H1 (cell line): ENCODE measurements at regions of chr12 and their contacts with region 1.

Region 1: GRCh38 chr12:3885277-3886094 is 12.3 kb upstream of the PARP11 start:
- DNase-seq: no peak
- H3K4me3 ChIP-seq: no peak overlapping the region
- H3K27ac ChIP-seq: no peak overlapping the region
- H3K4me1 ChIP-seq: peaks cover 0 to 2% (median under 1%) of the 10 kb centered on the region in 4 experiments; a peak in 5 of 7 replicates
- H3K27me3 ChIP-seq: no peaks in the 10 kb centered on the region; a peak in 1 of 7 replicates
- CTCF ChIP-seq: peak in 2 of 3 experiments; percentile 67 to 70; a peak in 3 of 4 replicates
- EP300 ChIP-seq: no peak
- POLR2A ChIP-seq: no peak
- RAD21 ChIP-seq: peak; percentile 93

Region 2: GRCh38 chr12:3803865-3804472 is 81.5 kb before region 1 on chr12:
- CTCF ChIA-PET with region 1: no interaction called
- POLR2A ChIA-PET with region 1: no interaction called
- DNase-seq: peak; percentile 38 to 79
- H3K4me3 ChIP-seq: no peak overlapping the region
- H3K27ac ChIP-seq: no peak overlapping the region
- H3K4me1 ChIP-seq: no peaks in the 10 kb centered on the region
- H3K27me3 ChIP-seq: no peaks in the 10 kb centered on the region
- CTCF ChIP-seq: peak; percentile 78 to 91 (median 90)
- EP300 ChIP-seq: no peak
- POLR2A ChIP-seq: no peak
- RAD21 ChIP-seq: peak; percentile 91 to 94

Region 3: DNA sequence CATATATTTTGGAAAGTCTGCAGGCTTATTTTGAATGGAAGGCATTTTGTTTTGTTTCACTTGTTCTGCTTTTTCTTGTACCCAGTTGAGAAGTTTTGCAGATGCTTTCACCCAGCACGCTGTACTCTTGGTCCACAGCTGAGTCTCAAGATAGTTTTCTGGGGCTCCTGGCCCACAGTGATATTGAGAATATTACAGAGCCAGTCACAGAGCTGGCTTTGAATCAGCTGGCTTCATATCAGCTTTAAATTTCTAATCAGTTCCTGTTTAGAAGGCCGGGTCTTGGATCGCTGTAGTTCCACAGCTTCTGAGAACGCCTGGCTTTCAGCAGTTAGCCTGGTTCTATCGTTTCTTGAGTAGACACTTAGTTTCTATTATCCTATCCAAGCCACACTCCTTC is 20.2 kb after region 1 on chr12:
- CTCF ChIA-PET with region 1: interaction called, 14 read pairs
- POLR2A ChIA-PET with region 1: no interaction called
- DNase-seq: no peak
- H3K4me3 ChIP-seq: no peak overlapping the region
- H3K27ac ChIP-seq: no peak overlapping the region
- H3K4me1 ChIP-seq: peaks cover 0 to 3% (median 0%) of the 10 kb centered on the region in 4 experiments; a peak in 2 of 7 replicates
- H3K27me3 ChIP-seq: no peaks in the 10 kb centered on the region; a peak in 1 of 7 replicates
- CTCF ChIP-seq: no peak
- EP300 ChIP-seq: no peak
- POLR2A ChIP-seq: no peak
- RAD21 ChIP-seq: no peak

Region 4: GRCh38 chr12:3925621-3926020 is 40.1 kb after region 1 on chr12:
- CTCF ChIA-PET with region 1: interaction called, 12 read pairs
- POLR2A ChIA-PET with region 1: interaction called, 3 read pairs
- DNase-seq: no peak
- H3K4me3 ChIP-seq: no peak overlapping the region
- H3K27ac ChIP-seq: no peak overlapping the region
- H3K4me1 ChIP-seq: peaks cover 0 to 6% (median 4%) of the 10 kb centered on the region in 4 experiments; a peak in 3 of 7 replicates
- H3K27me3 ChIP-seq: no peaks in the 10 kb centered on the region
- CTCF ChIP-seq: no peak
- EP300 ChIP-seq: no peak
- POLR2A ChIP-seq: no peak
- RAD21 ChIP-seq: no peak

Region 5: DNA sequence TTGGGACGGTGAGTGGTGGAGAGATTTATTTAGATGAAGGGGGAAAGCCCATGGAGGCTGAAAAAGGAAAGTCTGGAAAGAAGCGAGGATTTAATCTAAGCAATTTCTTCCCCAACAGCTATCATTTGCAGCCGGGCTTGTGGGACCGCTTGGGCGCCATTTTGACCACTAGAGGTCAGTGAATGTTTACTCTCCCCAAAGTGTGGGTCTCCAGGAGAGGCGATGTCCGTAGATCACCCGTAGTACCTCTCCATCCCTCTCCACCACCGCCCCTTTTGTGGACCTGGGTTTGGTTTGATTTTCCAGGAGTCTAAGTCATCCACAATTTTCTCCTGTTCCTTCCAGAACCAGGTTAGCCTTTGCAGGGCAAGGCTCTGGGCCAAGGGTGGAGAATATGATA is 79.0 kb after region 1 on chr12:
- CTCF ChIA-PET with region 1: interaction called, 59 read pairs
- POLR2A ChIA-PET with region 1: no interaction called
- DNase-seq: peak; percentile 17 to 70
- H3K4me3 ChIP-seq: no peak overlapping the region
- H3K27ac ChIP-seq: no peak overlapping the region
- H3K4me1 ChIP-seq: peaks cover 0 to 2% (median 0%) of the 10 kb centered on the region in 4 experiments; a peak in 2 of 7 replicates
- H3K27me3 ChIP-seq: no peaks in the 10 kb centered on the region
- CTCF ChIP-seq: peak; percentile 68 to 72 (median 69)
- EP300 ChIP-seq: no peak
- POLR2A ChIP-seq: no peak
- RAD21 ChIP-seq: peak; percentile 79 to 87

Region 6: DNA sequence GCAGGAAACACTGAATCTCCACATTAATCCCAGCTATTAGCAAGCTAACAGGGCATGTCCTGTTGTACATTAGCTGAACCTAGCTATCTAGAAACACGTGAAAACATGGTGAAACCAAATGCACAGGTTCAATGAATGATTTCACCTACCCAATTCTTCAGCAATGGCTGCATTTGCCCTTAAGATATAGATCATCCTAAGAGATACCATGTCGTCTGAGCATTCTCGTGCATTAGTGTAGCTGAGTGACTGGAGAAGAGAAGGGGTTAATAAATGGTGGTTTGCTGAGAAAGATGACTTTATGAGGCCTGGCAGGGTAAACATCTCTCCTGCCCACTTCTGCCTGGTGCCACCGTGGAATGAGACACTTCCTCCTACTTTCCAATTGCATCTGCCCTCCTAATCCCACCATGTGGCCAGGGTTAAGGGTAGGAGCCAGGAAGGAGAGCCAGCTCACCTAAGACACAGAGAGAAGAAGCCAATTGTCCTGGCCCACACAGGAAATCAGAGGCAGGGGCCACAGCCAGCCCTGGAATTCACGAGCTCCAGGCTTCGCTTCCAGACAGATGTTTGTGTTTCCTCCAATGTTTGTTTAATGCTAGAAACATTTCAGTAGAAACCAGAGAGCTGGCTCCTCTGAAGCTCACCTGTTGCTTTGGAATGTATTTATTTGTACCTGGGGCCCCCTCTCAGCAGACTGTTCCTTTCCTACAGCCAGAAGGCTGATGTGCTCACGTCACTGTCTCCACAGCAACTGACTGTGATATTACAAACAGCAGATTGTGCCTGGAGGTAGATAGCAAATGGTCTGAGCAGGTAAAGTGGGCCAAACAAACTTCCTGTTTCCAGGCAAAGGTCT is 113.7 kb after region 1 on chr12:
- CTCF ChIA-PET with region 1: interaction called, 33 read pairs
- POLR2A ChIA-PET with region 1: no interaction called
- DNase-seq: no peak
- H3K4me3 ChIP-seq: no peak overlapping the region
- H3K27ac ChIP-seq: no peak overlapping the region
- H3K4me1 ChIP-seq: 0 out of 7 replicates have a peak, but pooled peaks cover 0 to 2% (median 0%) of the 10 kb centered on the region in 4 experiments
- H3K27me3 ChIP-seq: peaks cover 0 to 3% (median under 1%) of the 10 kb centered on the region in 4 experiments; a peak in 1 of 7 replicates
- CTCF ChIP-seq: no peak
- EP300 ChIP-seq: no peak
- POLR2A ChIP-seq: no peak
- RAD21 ChIP-seq: no peak

Region 7: GRCh38 chr12:4037747-4038312 is 152.3 kb after region 1 on chr12:
- CTCF ChIA-PET with region 1: interaction called, 114 read pairs
- POLR2A ChIA-PET with region 1: no interaction called
- DNase-seq: no peak
- H3K4me3 ChIP-seq: no peak overlapping the region
- H3K27ac ChIP-seq: no peak overlapping the region
- H3K4me1 ChIP-seq: peaks cover 0 to 3% (median 0%) of the 10 kb centered on the region in 4 experiments; a peak in 2 of 7 replicates
- H3K27me3 ChIP-seq: no peaks in the 10 kb centered on the region
- CTCF ChIP-seq: peak in 2 of 3 experiments; percentile 67 to 73; a peak in 3 of 4 replicates
- EP300 ChIP-seq: no peak
- POLR2A ChIP-seq: no peak
- RAD21 ChIP-seq: peak; percentile 72 to 76

Region 8: GRCh38 chr12:4148418-4149056 is 263.1 kb after region 1 on chr12:
- CTCF ChIA-PET with region 1: no interaction called
- POLR2A ChIA-PET with region 1: no interaction called
- DNase-seq: no peak
- H3K4me3 ChIP-seq: no peak overlapping the region
- H3K27ac ChIP-seq: no peak overlapping the region
- H3K4me1 ChIP-seq: peaks cover 6 to 10% (median 8%) of the 10 kb centered on the region in 4 experiments; a peak in 6 of 7 replicates
- H3K27me3 ChIP-seq: no peaks in the 10 kb centered on the region; a peak in 2 of 7 replicates
- CTCF ChIP-seq: no peak
- EP300 ChIP-seq: no peak
- POLR2A ChIP-seq: no peak
- RAD21 ChIP-seq: no peak